ENCODE measurements at regions of chrX and their contacts with region 1.

Region 1: GRCh38 chrX:12701628-12702027 is 89.6 kb upstream of the PRPS2 start:
- DNase-seq: peak; percentile 69
- H3K4me3 ChIP-seq: no peak overlapping the region
- H3K27ac ChIP-seq: no peak overlapping the region
- H3K4me1 ChIP-seq: peaks cover 6% of the 10 kb centered on the region
- H3K27me3 ChIP-seq: no peaks in the 10 kb centered on the region
- CTCF ChIP-seq: peak; percentile 53 to 77

Region 2: GRCh38 chrX:11533211-11533651 is 1168.4 kb before region 1 on chrX:
- CTCF ChIA-PET with region 1: no interaction called
- dilution Hi-C with region 1: no loop called
- in situ Hi-C with region 1: loop called in 1 of 2 experiments (anchors 25 kb)
- intact Hi-C with region 1: loop called (anchors 1 kb)
- DNase-seq: peak; percentile 64
- H3K4me3 ChIP-seq: no peak overlapping the region
- H3K27ac ChIP-seq: no peak overlapping the region
- H3K4me1 ChIP-seq: no peaks in the 10 kb centered on the region
- H3K27me3 ChIP-seq: peaks cover 3% of the 10 kb centered on the region
- CTCF ChIP-seq: peak; percentile 70 to 89

Region 3: DNA sequence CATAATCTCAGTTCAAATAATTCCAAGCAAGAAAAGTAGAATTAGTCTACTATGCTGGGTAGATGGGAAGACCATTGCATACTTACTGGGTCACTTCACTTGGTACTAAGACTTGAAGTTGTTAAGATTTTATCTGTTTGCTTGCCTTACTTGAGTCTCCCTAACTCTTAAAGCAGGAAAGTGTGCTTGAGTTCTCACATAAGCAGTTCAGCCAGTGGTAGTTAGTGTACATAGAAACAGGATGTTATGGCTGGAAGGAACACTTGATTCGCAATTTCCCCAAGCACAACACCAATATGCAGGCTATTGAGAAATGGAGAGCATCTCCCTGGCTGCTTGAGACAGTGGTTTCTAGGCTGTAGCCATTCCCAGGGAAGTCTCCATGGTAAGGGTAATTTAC is 767.5 kb before region 1 on chrX:
- CTCF ChIA-PET with region 1: no interaction called
- dilution Hi-C with region 1: no loop called
- in situ Hi-C with region 1: no loop called
- intact Hi-C with region 1: no loop called
- DNase-seq: no peak
- H3K4me3 ChIP-seq: no peak overlapping the region
- H3K27ac ChIP-seq: no peak overlapping the region
- H3K4me1 ChIP-seq: no peaks in the 10 kb centered on the region
- H3K27me3 ChIP-seq: no peaks in the 10 kb centered on the region
- CTCF ChIP-seq: no peak

Region 4: GRCh38 chrX:12138361-12139313 is 563.0 kb before region 1 on chrX and contains the start of gene FRMPD4:
- CTCF ChIA-PET with region 1: interaction called, 4 read pairs
- dilution Hi-C with region 1: no loop called
- in situ Hi-C with region 1: no loop called
- intact Hi-C with region 1: loop called (anchors 1 kb)
- DNase-seq: peak; percentile 43
- H3K4me3 ChIP-seq: peak within 1 kb of the TSS; percentile 46 to 56 (median 46)
- H3K27ac ChIP-seq: no peak within 1 kb of the TSS
- H3K4me1 ChIP-seq: peaks cover 8% of the 10 kb centered on the region
- H3K27me3 ChIP-seq: no peaks in the 10 kb centered on the region
- CTCF ChIP-seq: peak in 1 of 2 donors; percentile 42
- total RNA-seq, gene FRMPD4: 0.17 to 0.24 TPM

Region 5: DNA sequence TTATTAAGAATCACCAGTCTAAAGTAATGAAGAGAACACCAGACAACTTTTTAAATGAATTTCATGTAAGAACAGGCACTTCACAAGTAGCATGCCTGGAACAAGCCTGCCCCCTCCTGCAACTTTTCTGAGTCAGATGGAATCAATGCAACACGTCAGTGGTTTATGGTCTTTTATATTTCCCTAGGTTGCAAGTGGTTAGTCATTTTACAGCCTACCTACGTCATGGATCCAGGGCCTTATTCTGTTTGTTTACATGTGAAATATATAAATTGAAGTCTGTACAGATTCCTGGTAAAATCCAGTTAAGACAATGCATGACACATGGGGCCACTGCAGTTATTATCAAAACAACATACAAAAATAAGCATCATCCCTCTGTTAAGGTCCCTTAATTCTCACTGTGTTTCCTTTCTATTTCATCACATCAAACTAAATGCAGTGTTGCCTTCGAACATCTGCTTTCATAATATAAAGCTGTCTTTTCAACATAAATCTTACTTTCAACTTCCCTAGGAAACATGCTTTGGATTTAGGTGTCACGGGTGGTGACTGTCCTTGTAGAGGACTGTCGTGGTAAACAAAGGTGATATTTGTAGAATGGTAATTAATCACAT is 254.1 kb before region 1 on chrX:
- CTCF ChIA-PET with region 1: no interaction called
- dilution Hi-C with region 1: no loop called
- in situ Hi-C with region 1: no loop called
- intact Hi-C with region 1: loop called (anchors 1 kb)
- DNase-seq: peak; percentile 91
- H3K4me3 ChIP-seq: no peak overlapping the region
- H3K27ac ChIP-seq: peak overlapping the region; percentile 84
- H3K4me1 ChIP-seq: peaks cover 17% of the 10 kb centered on the region
- H3K27me3 ChIP-seq: no peaks in the 10 kb centered on the region
- CTCF ChIP-seq: peak; percentile 9 to 46

Region 6: DNA sequence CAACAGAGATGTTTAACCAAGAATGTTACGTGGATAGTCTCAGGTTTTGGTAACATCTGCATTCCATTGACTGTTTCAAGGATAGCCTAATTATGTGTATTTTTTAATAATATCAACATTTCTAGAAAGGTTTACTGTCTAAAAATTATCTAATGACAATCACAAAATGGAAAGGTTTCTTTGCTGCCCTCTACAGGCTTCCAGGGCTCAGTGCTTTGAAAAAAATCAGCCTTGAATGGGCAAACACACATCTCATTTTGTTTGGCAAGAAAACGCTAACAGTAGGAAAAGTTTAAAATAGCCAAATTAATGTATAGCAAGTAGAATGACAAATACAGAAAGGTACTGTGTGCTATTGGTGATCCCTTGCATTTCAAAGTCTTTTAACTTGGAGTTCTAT is 133.8 kb before region 1 on chrX:
- CTCF ChIA-PET with region 1: no interaction called
- dilution Hi-C with region 1: no loop called
- in situ Hi-C with region 1: no loop called
- intact Hi-C with region 1: loop called (anchors 1 kb)
- DNase-seq: no peak
- H3K4me3 ChIP-seq: no peak overlapping the region
- H3K27ac ChIP-seq: no peak overlapping the region
- H3K4me1 ChIP-seq: peaks cover 5% of the 10 kb centered on the region
- H3K27me3 ChIP-seq: no peaks in the 10 kb centered on the region
- CTCF ChIP-seq: peak; percentile 77 to 89

Region 7: GRCh38 chrX:12595720-12596119 is 105.9 kb before region 1 on chrX:
- CTCF ChIA-PET with region 1: no interaction called
- dilution Hi-C with region 1: no loop called
- in situ Hi-C with region 1: no loop called
- intact Hi-C with region 1: loop called (anchors 1 kb)
- DNase-seq: no peak
- H3K4me3 ChIP-seq: no peak overlapping the region
- H3K27ac ChIP-seq: no peak overlapping the region
- H3K4me1 ChIP-seq: no peaks in the 10 kb centered on the region
- H3K27me3 ChIP-seq: no peaks in the 10 kb centered on the region
- CTCF ChIP-seq: peak in 1 of 2 donors; percentile 35

Region 8: GRCh38 chrX:12894074-12895030 is 192.7 kb after region 1 on chrX:
- CTCF ChIA-PET with region 1: no interaction called
- dilution Hi-C with region 1: no loop called
- in situ Hi-C with region 1: loop called in 1 of 2 experiments (anchors 10 kb)
- intact Hi-C with region 1: loop called (anchors 1 kb)
- DNase-seq: no peak
- H3K4me3 ChIP-seq: no peak overlapping the region
- H3K27ac ChIP-seq: no peak overlapping the region
- H3K4me1 ChIP-seq: peaks cover 3% of the 10 kb centered on the region
- H3K27me3 ChIP-seq: peaks cover 7% of the 10 kb centered on the region
- CTCF ChIP-seq: peak; percentile 48 to 86